ENCODE measurements at regions of chr1 and their contacts with region 1.

Region 1: GRCh38 chr1:10484521-10484920 is 9.8 kb downstream of the PEX14 start:
- DNase-seq: no peak
- CTCF ChIP-seq: no peak

Region 2: DNA sequence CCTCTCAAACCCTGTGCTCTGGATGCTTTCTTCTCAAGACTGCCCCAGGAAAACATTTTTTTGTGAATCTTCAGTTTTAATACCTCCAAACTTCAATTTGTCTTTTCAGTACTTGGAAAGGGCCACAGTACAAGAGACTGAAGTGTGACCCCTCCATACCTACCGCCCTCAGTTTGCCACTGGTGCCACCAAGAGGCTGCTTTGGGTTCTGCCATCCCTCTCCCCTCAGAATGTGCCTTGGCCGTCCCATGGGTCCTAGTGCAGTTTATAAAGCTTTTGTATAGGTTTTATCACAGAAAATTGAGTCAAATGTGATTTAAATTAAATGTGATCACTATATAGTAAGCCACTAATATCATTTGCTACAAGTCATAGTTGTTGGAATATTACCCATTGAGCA is 146.5 kb before region 1 on chr1:
- in situ Hi-C with region 1: no loop called
- DNase-seq: peak; percentile 72
- CTCF ChIP-seq: peak; percentile 57

Region 3: DNA sequence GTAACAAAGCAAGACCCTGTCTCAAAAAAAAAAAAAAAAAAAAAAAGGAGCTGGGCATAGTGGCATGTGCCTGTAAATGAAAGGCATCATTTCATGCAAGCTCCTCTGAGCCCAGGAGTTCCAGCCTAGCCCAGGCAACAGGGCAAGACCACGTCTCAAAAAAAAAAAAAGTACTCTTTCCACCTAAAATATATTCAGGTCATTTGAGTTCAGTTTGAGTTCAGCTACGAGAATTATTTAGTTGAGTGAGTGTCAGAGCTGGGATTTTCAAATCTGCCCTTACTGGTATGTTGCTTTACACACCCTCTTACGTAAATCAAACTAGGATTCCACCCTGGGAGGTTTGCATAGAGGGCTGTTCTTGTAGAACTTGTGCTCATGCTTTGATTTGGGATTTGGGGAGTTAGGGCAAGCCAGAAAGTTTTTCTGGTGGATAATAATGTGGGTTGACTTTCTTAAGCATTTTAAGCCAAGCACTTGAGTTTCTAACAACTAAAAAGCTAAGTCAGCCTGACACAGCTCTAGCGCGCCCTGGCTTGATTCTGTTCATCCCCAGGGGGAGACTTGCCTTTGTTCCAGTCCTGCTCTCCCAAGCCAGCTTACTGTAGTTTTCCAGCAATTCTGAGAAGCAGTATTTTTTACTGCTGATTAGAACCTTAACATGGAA is 97.0 kb before region 1 on chr1:
- in situ Hi-C with region 1: no loop called
- DNase-seq: no peak
- CTCF ChIP-seq: no peak

Region 4: DNA sequence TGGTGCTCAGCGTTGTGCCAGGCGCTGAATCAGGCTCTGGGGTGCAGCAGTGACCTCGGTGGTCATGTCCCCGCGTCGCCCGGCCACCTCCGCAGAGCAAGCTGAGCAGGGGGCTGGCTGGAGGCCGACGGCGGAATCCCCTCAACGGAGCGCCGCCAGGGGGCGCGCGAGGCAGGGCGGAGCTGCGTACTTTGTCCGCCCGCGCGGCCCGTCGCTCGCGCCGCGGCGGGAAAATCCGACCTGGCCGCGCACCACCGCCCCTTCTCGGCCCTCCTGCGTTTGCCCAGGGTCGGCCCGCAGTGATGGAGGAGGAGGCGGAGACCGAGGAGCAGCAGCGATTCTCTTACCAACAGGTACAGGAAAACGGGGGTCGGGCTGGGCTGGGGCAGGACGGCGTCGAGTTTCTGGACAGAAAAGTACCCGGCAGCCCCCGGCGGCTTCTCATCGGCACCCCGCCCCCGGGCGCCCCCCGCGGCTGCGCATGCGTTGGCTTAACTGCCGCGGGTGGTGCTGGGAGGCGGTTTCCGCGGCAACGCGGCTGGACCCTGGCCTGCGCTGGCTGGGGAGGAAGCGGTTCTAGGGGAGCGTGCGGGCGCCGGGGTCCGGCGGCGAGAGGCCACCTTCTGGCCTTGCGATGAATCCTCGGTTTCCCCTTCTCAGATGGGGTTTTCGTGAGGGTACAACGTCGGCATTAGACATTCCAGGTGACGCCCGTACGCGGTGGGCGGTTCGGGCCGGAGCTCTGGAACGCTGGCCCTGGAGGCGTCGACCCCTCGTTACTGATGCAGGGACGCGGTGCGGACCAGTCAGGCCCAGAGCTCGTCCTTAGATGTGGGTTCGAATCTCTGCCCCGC is 54.1 kb before region 1 on chr1 and contains the start of gene CENPS:
- in situ Hi-C with region 1: loop called (anchors 10 kb)
- DNase-seq: peak; percentile 99
- CTCF ChIP-seq: peak; percentile 98

Region 5: GRCh38 chr1:10540277-10541005 is 55.9 kb after region 1 on chr1:
- in situ Hi-C with region 1: no loop called
- DNase-seq: no peak
- CTCF ChIP-seq: no peak

Measured in GM13976 (cell line).